ENCODE measurements at regions of chr4 and their contacts with region 1.

Region 1: DNA sequence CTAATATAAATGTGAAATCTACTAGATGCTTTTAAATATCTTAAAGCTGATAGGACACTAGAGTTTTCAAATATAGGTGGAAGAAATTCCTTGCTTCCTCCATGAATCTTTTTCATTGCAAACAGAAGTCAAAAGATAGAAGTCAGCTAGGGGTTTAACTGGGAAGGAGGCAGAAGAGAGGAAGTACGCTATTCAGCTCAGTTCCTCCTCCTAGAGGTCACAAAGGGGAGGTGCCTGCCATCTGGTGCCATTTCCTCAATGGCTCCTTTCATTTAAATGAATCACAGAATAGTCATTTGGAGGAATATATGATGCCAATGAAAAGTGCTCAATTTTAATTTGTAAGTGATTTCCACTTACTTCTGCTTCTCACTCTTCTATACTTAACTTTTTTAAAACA is 8.5 kb downstream of the COL25A1 start:
- DNase-seq: peak in 1 of 5 donors; percentile 24
- ATAC-seq: no peak
- H3K4me3 ChIP-seq: no peak overlapping the region
- H3K27ac ChIP-seq: no peak overlapping the region
- H3K4me1 ChIP-seq: no peaks in the 10 kb centered on the region
- H3K27me3 ChIP-seq: peaks cover 0 to 7% (median 0%) of the 10 kb centered on the region in 9 donors
- CTCF ChIP-seq: peak in 8 of 12 donors; percentile 9 to 29 (median 24)
- POLR2A ChIP-seq: no peak

Region 2: DNA sequence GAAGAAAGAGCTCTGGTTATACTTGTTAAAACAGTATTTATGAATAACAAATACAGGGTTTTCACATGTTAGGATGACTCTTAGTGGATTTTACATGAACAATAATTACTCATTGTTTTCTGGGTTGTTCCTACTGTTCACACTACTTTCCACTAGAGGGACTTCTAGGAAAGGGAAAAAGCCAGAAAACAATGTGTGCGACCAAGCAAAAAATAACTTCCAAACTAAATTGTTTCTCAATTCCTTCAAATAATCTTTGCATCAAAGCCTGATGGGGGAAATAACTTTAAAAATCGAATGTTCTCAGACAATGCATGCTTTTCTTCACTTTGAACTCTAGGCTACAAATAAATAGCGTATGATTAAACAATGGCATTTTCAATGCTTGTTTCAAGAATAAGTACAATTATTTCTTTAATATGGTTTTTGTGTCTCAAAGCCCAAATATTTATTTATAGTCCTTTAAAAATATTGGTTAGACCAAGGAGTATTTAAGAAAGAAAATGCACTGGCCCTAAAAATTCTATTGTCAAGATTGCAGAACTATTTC is 459.1 kb before region 1 on chr4:
- intact Hi-C with region 1: loop called in 5 of 10 experiments (anchors 2 to 10 kb)
- DNase-seq: no peak
- ATAC-seq: no peak
- H3K4me3 ChIP-seq: no peak overlapping the region
- H3K27ac ChIP-seq: no peak overlapping the region
- H3K4me1 ChIP-seq: peaks cover 0 to 19% (median 0%) of the 10 kb centered on the region in 12 donors
- H3K27me3 ChIP-seq: no peaks in the 10 kb centered on the region
- CTCF ChIP-seq: peak; percentile 45 to 78 (median 70)
- POLR2A ChIP-seq: no peak

Region 3: GRCh38 chr4:109184491-109184961 is 109.5 kb before region 1 on chr4:
- intact Hi-C with region 1: loop called in 2 of 10 experiments (anchors 5 to 10 kb)
- DNase-seq: peak in 4 of 5 donors; percentile 25 to 49 (median 35)
- ATAC-seq: peak; percentile 94 to 97 (median 95)
- H3K4me3 ChIP-seq: no peak overlapping the region
- H3K27ac ChIP-seq: peak overlapping the region; percentile 24 to 78 (median 60)
- H3K4me1 ChIP-seq: peaks cover 0 to 20% (median 12%) of the 10 kb centered on the region in 12 donors
- H3K27me3 ChIP-seq: no peaks in the 10 kb centered on the region
- CTCF ChIP-seq: peak in 2 of 12 donors; percentile 9 to 21
- POLR2A ChIP-seq: no peak

Region 4: GRCh38 chr4:109207060-109207459 is 86.9 kb before region 1 on chr4:
- intact Hi-C with region 1: no loop called
- DNase-seq: no peak
- ATAC-seq: no peak
- H3K4me3 ChIP-seq: no peak overlapping the region
- H3K27ac ChIP-seq: no peak overlapping the region
- H3K4me1 ChIP-seq: no peaks in the 10 kb centered on the region
- H3K27me3 ChIP-seq: no peaks in the 10 kb centered on the region
- CTCF ChIP-seq: no peak
- POLR2A ChIP-seq: no peak